ENCODE measurements at regions of chr21 and their contacts with region 1.

Region 1: GRCh38 chr21:44353191-44353970 is at the start of gene TRPM2:
- DNase-seq: peak; percentile 80
- ATAC-seq: peak; percentile 82
- total RNA-seq, gene TRPM2: 9.9 TPM

Region 2: DNA sequence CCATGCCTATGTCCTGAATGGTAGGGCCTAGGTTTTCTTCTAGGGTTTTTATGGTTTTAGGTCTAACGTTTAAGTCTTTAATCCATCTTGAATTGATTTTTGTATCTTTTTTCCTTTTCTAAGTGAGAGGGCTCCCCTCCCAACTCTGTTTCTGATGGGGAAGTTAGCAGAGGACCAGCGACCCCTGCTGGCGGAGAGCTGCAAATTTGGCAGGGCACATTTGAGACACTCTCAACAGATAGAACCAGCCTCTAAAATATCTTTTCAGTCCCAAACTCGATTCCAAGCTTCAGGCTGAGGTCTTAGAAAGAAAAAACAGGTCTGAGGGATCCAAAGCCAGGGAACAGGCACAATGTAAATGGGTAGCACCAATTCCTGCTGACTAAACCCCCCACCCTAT is 134.4 kb after region 1 on chr21:
- intact Hi-C with region 1: loop called (anchors 10 kb)
- DNase-seq: no peak
- ATAC-seq: no peak